HCT116 (cell line): ENCODE measurements at regions of chr19 and their contacts with region 1.

Region 1: DNA sequence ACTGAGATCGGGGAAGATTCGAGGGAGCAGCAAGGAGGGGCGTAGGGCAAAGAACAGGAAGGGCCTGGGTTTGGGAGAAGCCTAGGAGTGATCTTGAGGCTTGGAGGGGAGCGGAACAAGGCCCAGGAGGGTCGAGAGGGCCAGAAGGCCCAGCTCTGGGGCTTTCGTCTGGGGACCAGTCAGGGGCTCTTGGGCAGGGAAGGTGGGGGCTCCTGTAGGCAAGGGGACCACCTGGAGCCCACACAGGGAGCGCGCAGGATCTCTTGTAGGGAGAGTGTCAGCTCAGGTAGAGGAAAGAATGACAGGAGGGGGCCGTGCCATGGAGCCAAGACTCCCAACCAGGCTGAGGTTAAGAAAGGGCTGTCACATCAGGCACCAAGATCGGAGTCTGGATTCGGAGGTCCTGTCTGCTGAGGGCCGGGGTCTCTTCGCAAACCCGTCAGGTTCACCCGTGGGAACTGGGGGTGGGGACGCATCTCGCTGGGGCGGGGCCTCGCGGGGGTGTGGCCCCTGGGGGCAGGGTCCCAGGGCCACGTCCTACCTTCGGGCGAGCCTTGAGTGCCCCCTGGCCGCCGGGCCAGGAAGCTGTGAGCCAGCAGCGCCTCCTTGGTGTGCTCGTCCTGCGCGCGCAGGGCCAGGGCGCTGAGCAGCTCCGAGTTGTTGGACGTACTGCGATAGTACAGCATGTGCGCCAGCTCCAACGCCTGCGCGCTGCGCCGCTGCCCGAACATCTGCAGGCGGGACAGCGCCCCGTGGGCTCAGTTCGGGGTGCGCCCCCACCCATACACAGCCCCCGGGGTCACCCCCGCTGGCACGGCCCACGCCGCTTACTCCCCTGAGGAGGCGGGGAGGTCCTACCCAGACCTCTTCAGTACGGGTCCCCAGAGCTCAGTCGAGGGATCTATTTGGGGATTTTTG is 8.4 kb downstream of the EMP3 start:
- DNase-seq: peak; percentile 90
- ATAC-seq: peak; percentile 84
- H3K4me3 ChIP-seq: peak overlapping the region; percentile 56 to 63
- H3K27ac ChIP-seq: peak overlapping the region; percentile 75
- H3K4me1 ChIP-seq: peaks cover 12 to 38% of the 10 kb centered on the region in 2 experiments
- H3K27me3 ChIP-seq: no peaks in the 10 kb centered on the region
- CTCF ChIP-seq: peak; percentile 74 to 95 (median 78)
- POLR2A ChIP-seq: peak; percentile 74
- RAD21 ChIP-seq: peak; percentile 97

Region 2: GRCh38 chr19:48271531-48272151 is 62.1 kb before region 1 on chr19:
- CTCF ChIA-PET with region 1: interaction called, 32 read pairs
- POLR2A ChIA-PET with region 1: interaction called, 10 read pairs
- RAD21 ChIA-PET with region 1: interaction called, 7 read pairs
- intact Hi-C with region 1: loop called (anchors 1 kb)
- DNase-seq: no peak
- ATAC-seq: peak; percentile 43
- H3K4me3 ChIP-seq: peak overlapping the region; percentile 56 to 61
- H3K27ac ChIP-seq: peak overlapping the region; percentile 85
- H3K4me1 ChIP-seq: peaks cover 18 to 43% of the 10 kb centered on the region in 2 experiments
- H3K27me3 ChIP-seq: no peaks in the 10 kb centered on the region
- CTCF ChIP-seq: no peak
- POLR2A ChIP-seq: peak; percentile 44
- RAD21 ChIP-seq: no peak

Region 3: DNA sequence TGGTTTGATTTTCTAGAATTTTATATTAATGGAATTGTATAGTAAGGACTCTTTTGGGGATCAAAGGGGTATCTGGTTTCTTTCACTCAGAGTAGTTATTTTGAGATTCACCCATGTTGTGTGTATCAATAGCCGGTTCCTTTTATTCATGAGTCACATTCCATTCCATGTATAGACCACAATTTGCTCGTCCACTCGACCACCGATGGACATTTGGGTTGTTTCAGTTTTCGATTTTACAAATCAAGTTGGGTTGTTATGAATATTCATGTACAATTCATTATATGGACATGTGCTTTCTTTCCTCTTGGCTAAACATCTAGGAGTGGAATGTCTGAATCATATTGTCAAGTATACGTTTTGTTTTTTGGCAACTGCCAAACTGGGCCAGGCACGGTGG is 18.0 kb before region 1 on chr19:
- CTCF ChIA-PET with region 1: interaction called, 158 read pairs
- POLR2A ChIA-PET with region 1: interaction called, 53 read pairs
- RAD21 ChIA-PET with region 1: interaction called, 32 to 54 read pairs
- intact Hi-C with region 1: loop called (anchors 1 kb)
- DNase-seq: no peak
- ATAC-seq: no peak
- H3K4me3 ChIP-seq: no peak overlapping the region
- H3K27ac ChIP-seq: no peak overlapping the region
- H3K4me1 ChIP-seq: peaks cover 9 to 18% of the 10 kb centered on the region in 2 experiments
- H3K27me3 ChIP-seq: no peaks in the 10 kb centered on the region
- CTCF ChIP-seq: no peak
- POLR2A ChIP-seq: no peak
- RAD21 ChIP-seq: no peak

Region 4: DNA sequence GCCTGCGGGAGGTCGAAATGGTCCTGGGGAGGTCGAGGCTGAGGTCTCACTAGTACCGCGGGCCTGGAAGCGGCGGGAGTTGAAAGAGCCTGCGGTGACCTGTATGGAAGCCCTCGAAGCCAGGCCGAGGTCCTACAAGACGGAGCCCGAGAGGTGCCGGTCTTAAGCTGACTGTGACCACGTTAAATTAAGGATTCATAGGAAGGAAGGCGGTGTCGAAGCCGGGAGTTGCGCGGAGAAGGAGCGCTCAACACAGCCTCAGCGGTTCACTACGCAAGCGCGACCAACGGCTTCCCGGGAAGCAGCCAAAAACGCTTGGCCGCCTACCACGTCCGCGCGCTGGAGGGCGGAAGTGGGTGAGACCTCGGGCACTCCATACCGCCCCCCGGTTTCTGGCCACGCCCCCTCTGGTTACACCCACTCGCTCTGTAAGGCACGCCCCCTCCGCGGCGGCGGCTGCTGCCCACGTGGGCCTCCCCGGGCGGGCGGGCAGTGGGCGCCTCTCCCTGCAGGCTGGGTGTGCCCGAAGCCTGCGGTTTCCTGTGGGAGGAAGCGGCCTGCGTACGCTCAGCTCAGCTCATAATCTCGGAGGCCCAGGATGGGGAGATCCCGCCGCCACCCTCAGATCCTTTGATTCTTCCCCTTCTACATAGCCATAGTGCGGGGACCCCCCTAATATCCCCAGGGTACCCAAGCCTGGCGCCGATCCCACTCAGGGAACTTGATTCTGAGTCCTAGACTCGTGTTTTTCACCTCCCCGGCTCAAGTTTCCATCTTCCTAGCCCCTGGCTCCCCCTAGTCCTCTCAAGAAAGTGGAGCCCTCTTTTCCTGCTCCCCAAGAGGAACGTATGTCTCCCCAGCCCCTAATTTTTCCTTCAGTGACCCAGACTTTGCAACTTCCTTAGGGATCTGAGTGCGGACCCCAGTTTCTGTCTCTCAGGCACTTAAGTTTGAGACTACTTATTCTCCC is 11.8 kb before region 1 on chr19:
- CTCF ChIA-PET with region 1: interaction called, 158 read pairs
- POLR2A ChIA-PET with region 1: interaction called, 53 read pairs
- RAD21 ChIA-PET with region 1: interaction called, 32 to 54 read pairs
- intact Hi-C with region 1: loop called (anchors 1 kb)
- DNase-seq: peak; percentile 94
- ATAC-seq: peak; percentile 69
- H3K4me3 ChIP-seq: peak overlapping the region; percentile 55 to 67
- H3K27ac ChIP-seq: peak overlapping the region; percentile 96
- H3K4me1 ChIP-seq: peaks cover 40 to 76% of the 10 kb centered on the region in 2 experiments
- H3K27me3 ChIP-seq: no peaks in the 10 kb centered on the region
- CTCF ChIP-seq: peak in 1 of 3 experiments; percentile 8; a peak in 1 of 6 replicates
- POLR2A ChIP-seq: peak; percentile 59
- RAD21 ChIP-seq: no peak

Region 5: GRCh38 chr19:48351341-48351752 is 17.6 kb after region 1 on chr19:
- CTCF ChIA-PET with region 1: interaction called, 9 read pairs
- POLR2A ChIA-PET with region 1: interaction called, 10 read pairs
- RAD21 ChIA-PET with region 1: interaction called in 1 of 2 experiments, 5 read pairs
- intact Hi-C with region 1: no loop called
- DNase-seq: no peak
- ATAC-seq: peak; percentile 67
- H3K4me3 ChIP-seq: no peak overlapping the region
- H3K27ac ChIP-seq: no peak overlapping the region
- H3K4me1 ChIP-seq: peaks cover 22 to 46% of the 10 kb centered on the region in 2 experiments
- H3K27me3 ChIP-seq: no peaks in the 10 kb centered on the region
- CTCF ChIP-seq: peak; percentile 75 to 96 (median 95); a peak in 5 of 6 replicates
- POLR2A ChIP-seq: no peak
- RAD21 ChIP-seq: peak; percentile 80

Region 6: GRCh38 chr19:48363810-48364563 is 30.3 kb after region 1 on chr19 and contains the starts of genes SYNGR4 and TMEM143:
- CTCF ChIA-PET with region 1: interaction called, 24 read pairs
- POLR2A ChIA-PET with region 1: interaction called, 16 read pairs
- RAD21 ChIA-PET with region 1: interaction called in 1 of 2 experiments, 3 read pairs
- intact Hi-C with region 1: no loop called
- DNase-seq: peak; percentile 99
- ATAC-seq: peak; percentile 84
- H3K4me3 ChIP-seq: peak within 1 kb of the TSS; percentile 62 to 69
- H3K27ac ChIP-seq: peak within 1 kb of the TSS; percentile 86
- H3K4me1 ChIP-seq: peaks cover 5 to 24% of the 10 kb centered on the region in 2 experiments
- H3K27me3 ChIP-seq: no peaks in the 10 kb centered on the region
- CTCF ChIP-seq: no peak
- POLR2A ChIP-seq: peak; percentile 36
- RAD21 ChIP-seq: no peak
- total RNA-seq, gene SYNGR4: 0.49 TPM
- total RNA-seq, gene TMEM143: 13.2 TPM

Region 7: DNA sequence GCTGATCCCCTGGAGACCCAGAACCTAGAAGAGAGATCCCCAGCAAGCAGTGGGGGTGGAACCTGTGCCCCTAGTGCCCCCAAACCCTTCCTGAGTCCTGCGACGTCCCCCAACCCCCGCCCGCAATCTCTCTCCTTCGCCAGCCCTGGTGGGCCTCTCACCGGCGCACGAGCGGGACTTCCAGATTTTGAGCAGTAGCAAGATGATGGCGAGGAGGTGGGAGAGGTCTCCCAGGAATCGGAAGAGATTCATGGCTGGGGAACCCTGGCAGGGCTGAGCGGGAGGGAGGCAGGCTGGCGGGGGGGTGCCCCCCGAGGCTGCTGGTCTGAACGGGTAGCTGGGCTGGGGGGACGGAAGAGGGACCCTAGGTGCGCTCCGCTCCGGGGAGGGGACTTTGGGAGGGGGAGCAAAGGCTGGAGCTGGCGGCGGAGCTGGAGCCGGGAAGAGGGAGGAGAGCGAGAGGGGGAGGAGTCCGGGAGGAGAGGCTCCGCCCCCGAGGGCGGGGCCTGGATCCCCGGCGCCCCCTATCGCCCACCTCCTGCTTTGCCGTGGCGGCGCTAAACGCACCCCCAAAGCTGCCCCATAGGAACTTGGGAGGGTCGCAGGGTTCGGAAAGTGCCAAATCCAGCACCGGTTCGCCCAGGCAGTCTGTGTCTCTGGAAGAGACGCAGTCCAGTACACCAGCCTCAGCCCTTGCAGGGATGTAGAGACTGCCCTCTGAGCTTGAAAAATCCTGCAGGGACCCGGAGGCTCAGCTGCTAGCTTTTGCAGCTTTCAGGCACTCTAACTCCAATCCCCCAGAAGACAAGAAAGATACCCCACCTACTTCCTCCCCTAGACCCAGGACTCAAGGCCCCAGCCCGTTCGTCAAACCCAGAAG is 57.6 kb after region 1 on chr19 and contains the start of gene KDELR1:
- CTCF ChIA-PET with region 1: interaction called, 20 read pairs
- POLR2A ChIA-PET with region 1: no interaction called
- RAD21 ChIA-PET with region 1: no interaction called
- intact Hi-C with region 1: loop called (anchors 10 kb)
- DNase-seq: no peak
- ATAC-seq: peak; percentile 80
- H3K4me3 ChIP-seq: peak within 1 kb of the TSS; percentile 82 to 96
- H3K27ac ChIP-seq: peak within 1 kb of the TSS; percentile 80
- H3K4me1 ChIP-seq: peaks cover 9 to 52% of the 10 kb centered on the region in 2 experiments
- H3K27me3 ChIP-seq: no peaks in the 10 kb centered on the region
- CTCF ChIP-seq: peak in 2 of 3 experiments; percentile 81 to 95; a peak in 5 of 6 replicates
- POLR2A ChIP-seq: no peak
- RAD21 ChIP-seq: no peak
- total RNA-seq, gene KDELR1: 212 TPM